ENCODE measurements at regions of chr3 and their contacts with region 1.

Region 1: GRCh38 chr3:47420511-47421484 is 40.0 kb downstream of the PTPN23 start:
- DNase-seq: peak; percentile 87

Region 2: DNA sequence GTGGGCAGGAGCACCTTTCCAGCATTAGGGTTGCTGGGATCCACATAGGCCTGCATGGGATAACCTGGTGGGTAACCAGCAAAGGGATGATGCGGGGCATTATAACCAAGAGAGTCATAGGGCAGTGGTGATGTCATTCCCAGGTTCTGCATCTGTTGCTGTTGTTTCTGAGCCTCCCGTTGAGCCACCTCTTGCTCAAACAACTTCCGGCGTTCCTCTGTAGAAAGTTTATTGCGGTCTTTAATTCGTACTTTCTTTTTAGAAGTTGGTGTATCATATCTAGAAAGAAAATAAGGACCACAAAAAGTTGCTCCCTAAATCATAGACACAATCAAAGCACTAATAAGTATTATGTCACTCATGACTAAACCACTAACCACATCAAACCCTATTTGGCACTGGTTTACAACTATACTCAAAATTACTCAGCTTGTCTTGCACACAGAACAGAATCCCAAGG is 363.6 kb before region 1 on chr3:
- intact Hi-C with region 1: no loop called
- DNase-seq: no peak

Region 3: GRCh38 chr3:47475570-47476329 is 55.0 kb after region 1 on chr3 and contains the start of gene SCAP:
- intact Hi-C with region 1: loop called (anchors 1 kb)
- DNase-seq: peak; percentile 97
- total RNA-seq, gene SCAP: 37.9 TPM

Region 4: GRCh38 chr3:47781685-47782445 is 361.1 kb after region 1 on chr3 and contains the start of gene SMARCC1:
- intact Hi-C with region 1: loop called (anchors 5 kb)
- DNase-seq: peak; percentile 99
- total RNA-seq, gene SMARCC1: 31.7 TPM